ENCODE measurements at regions of chr18 and their contacts with region 1.

Region 1: DNA sequence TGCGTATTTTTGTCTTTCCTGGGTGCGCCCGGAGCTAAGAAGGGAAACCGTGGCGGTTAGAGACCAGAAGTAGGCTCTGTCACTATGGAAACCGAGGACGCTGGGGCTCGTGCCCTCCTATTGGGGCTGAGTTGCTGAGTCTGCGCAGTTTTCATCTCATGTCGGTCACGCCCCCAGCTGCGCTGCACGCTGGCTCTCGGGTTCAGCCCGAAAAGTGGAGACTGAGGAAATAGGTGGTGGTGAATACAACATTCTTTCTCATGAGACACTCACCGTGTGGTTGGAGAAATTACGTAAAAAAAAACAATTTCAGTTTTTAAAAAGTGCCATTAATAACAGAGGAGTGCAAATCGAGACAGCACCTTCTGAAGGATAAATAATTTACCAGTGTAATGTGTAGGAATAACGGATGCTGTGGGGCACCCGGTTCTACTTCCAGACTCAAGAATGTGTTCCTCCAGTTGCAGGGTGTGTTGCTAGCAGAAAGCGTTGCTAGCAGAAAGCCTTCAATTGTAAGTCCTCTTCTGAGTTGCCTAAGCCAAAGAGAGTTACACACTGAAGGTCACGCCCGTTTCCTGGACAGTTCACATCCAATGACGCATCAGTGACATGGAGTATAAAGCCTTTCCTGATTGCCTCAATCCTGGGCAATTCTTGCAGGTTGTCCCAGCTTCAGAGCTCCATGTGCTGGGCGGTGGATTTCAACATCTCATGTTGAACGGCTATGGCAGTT is 20.4 kb upstream of the CXXC1 start:
- DNase-seq: peak; percentile 92
- H3K4me3 ChIP-seq: peak overlapping the region; percentile 28 to 45 (median 37)
- H3K27ac ChIP-seq: peak overlapping the region; percentile 79
- H3K4me1 ChIP-seq: peaks cover 6% of the 10 kb centered on the region
- H3K27me3 ChIP-seq: no peaks in the 10 kb centered on the region
- CTCF ChIP-seq: no peak

Region 2: DNA sequence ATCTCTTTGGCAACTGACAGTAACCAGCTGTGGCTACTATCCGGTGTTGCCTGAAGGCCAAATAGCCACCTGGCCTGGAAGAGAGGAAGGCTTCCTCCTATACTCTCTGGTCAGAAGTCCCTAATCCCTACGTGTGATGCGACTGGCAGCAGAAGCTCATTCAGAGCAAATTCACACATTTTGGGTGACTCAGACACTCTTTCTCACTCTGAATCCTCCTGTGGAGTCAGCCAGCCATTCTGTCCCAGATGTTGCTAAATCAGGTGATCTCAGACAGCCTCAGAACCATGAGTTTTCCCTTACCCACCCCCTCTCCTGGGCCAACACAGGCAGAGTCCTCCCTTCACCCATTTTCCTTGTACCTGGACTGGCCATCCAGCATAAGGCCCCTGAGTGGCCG is 76.3 kb before region 1 on chr18:
- CTCF ChIA-PET with region 1: no interaction called
- dilution Hi-C with region 1: no loop called
- in situ Hi-C with region 1: no loop called
- intact Hi-C with region 1: loop called (anchors 5 kb)
- DNase-seq: peak; percentile 82
- H3K4me3 ChIP-seq: no peak overlapping the region
- H3K27ac ChIP-seq: no peak overlapping the region
- H3K4me1 ChIP-seq: no peaks in the 10 kb centered on the region
- H3K27me3 ChIP-seq: no peaks in the 10 kb centered on the region
- CTCF ChIP-seq: no peak

Region 3: GRCh38 chr18:50240083-50240563 is 67.8 kb before region 1 on chr18:
- CTCF ChIA-PET with region 1: no interaction called
- dilution Hi-C with region 1: no loop called
- in situ Hi-C with region 1: no loop called
- intact Hi-C with region 1: loop called (anchors 2 kb)
- DNase-seq: peak; percentile 96
- H3K4me3 ChIP-seq: no peak overlapping the region
- H3K27ac ChIP-seq: peak overlapping the region; percentile 88
- H3K4me1 ChIP-seq: peaks cover 3% of the 10 kb centered on the region
- H3K27me3 ChIP-seq: no peaks in the 10 kb centered on the region
- CTCF ChIP-seq: no peak

Region 4: GRCh38 chr18:50281295-50281971 is 26.5 kb before region 1 on chr18 and contains the start of gene MBD1:
- CTCF ChIA-PET with region 1: interaction called, 3 read pairs
- dilution Hi-C with region 1: no loop called
- in situ Hi-C with region 1: no loop called
- intact Hi-C with region 1: loop called (anchors 1 kb)
- DNase-seq: peak; percentile 98
- H3K4me3 ChIP-seq: peak within 1 kb of the TSS; percentile 81 to 100 (median 98)
- H3K27ac ChIP-seq: peak within 1 kb of the TSS; percentile 86
- H3K4me1 ChIP-seq: peaks cover 57% of the 10 kb centered on the region
- H3K27me3 ChIP-seq: no peaks in the 10 kb centered on the region
- CTCF ChIP-seq: peak in 1 of 2 donors; percentile 26
- total RNA-seq, gene MBD1: 102 to 196 TPM

Region 5: GRCh38 chr18:50287441-50288347 is 20.2 kb before region 1 on chr18 and contains the start of gene CXXC1:
- CTCF ChIA-PET with region 1: no interaction called
- dilution Hi-C with region 1: no loop called
- in situ Hi-C with region 1: no loop called
- intact Hi-C with region 1: loop called (anchors 1 kb)
- DNase-seq: peak; percentile 99
- H3K4me3 ChIP-seq: peak within 1 kb of the TSS; percentile 88 to 97 (median 95)
- H3K27ac ChIP-seq: peak within 1 kb of the TSS; percentile 66
- H3K4me1 ChIP-seq: peaks cover 26% of the 10 kb centered on the region
- H3K27me3 ChIP-seq: no peaks in the 10 kb centered on the region
- CTCF ChIP-seq: peak; percentile 39 to 51
- total RNA-seq, gene CXXC1: 27.7 to 78.2 TPM